Left ventricle myocardium inferior (tissue), 1 donor: ENCODE measurements at regions of chr2 and their contacts with region 1.

Region 1: DNA sequence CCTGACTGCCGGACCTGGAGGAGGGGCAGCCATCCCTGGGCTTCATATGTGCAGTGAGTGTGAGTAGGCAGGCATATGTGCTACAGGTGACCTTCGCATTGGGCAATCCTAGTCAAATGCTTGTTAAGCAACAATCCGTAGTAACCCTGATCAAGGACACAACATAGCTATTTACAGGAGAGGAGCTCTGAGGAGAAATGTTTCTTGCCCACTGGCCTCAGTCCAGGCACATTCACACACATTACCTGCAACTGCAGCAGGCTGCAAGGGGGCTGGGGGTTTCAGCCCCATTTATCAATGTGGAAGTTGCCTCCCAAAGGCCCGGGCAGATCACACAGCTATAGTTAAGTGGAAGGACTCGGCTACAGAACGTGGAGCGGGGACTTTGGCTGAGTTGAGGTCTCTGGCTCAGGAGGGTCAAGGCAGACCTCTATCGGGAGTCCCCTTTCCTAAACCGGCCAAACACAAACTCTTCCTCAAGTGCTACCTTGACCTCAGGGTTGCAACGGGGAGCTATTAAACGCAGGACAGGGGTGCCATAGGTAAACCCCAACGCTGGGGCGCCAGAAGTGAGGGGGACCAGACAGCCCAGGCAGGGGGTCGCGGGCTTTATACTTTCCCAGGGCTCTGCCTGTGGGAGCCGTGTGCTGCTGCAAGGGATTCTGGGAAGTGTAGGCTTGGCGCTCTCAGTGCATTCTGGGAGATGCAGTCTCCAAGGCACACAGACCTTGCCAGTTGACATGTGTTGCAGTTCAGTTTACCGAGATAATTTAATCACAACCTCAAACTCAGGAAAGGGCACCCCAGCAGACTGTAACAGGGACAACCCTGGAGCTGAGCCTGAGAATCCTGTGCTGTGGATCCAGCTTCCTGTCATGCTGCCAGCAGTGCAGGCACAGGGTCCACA is 9.4 kb downstream of the KHK start:
- DNase-seq: peak; percentile 60
- H3K4me3 ChIP-seq: peak overlapping the region; percentile 58
- H3K27ac ChIP-seq: peak overlapping the region; percentile 75
- H3K4me1 ChIP-seq: peaks cover 12% of the 10 kb centered on the region
- H3K27me3 ChIP-seq: no peaks in the 10 kb centered on the region
- CTCF ChIP-seq: no peak

Region 2: GRCh38 chr2:27133905-27134780 is 38.1 kb after region 1 on chr2 and contains the start of gene PREB:
- intact Hi-C with region 1: no loop called
- DNase-seq: peak; percentile 97
- H3K4me3 ChIP-seq: peak within 1 kb of the TSS; percentile 99
- H3K27ac ChIP-seq: peak within 1 kb of the TSS; percentile 94
- H3K4me1 ChIP-seq: peaks cover 23% of the 10 kb centered on the region
- H3K27me3 ChIP-seq: no peaks in the 10 kb centered on the region
- CTCF ChIP-seq: no peak
- total RNA-seq, gene PREB: 54.6 TPM

Region 3: GRCh38 chr2:27217217-27218121 is 121.5 kb after region 1 on chr2 and contains the start of gene CAD:
- intact Hi-C with region 1: loop called (anchors 10 kb)
- DNase-seq: peak; percentile 89
- H3K4me3 ChIP-seq: peak within 1 kb of the TSS; percentile 80
- H3K27ac ChIP-seq: peak within 1 kb of the TSS; percentile 78
- H3K4me1 ChIP-seq: peaks cover 38% of the 10 kb centered on the region
- H3K27me3 ChIP-seq: no peaks in the 10 kb centered on the region
- CTCF ChIP-seq: peak; percentile 54
- total RNA-seq, gene CAD: 7.7 TPM

Region 4: DNA sequence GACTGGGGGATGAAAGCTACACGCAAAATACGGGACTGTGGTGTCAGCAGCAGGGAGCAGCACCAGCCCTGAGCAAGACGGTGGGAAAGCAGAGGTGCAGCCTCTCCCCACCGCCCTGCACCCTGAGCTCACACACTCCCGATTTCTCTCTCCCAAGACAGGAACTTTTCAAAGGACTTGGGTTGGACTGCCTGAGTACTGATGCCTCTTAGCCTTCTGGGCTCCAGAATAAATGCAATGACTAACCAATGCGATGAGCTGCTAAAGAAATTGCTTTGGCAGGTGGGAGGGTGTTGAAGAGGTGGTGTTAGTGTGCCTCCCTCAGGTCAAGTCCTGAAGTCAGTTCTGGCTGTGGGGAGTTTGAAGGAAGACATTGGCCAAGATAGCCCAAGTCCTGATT is 195.9 kb after region 1 on chr2:
- intact Hi-C with region 1: loop called (anchors 10 kb)
- DNase-seq: no peak
- H3K4me3 ChIP-seq: peak overlapping the region; percentile 74
- H3K27ac ChIP-seq: peak overlapping the region; percentile 78
- H3K4me1 ChIP-seq: peaks cover 97% of the 10 kb centered on the region
- H3K27me3 ChIP-seq: peaks cover 6% of the 10 kb centered on the region
- CTCF ChIP-seq: peak; percentile 12